B cell (primary cell): ENCODE measurements at regions of chr4 and their contacts with region 1.

Region 1: DNA sequence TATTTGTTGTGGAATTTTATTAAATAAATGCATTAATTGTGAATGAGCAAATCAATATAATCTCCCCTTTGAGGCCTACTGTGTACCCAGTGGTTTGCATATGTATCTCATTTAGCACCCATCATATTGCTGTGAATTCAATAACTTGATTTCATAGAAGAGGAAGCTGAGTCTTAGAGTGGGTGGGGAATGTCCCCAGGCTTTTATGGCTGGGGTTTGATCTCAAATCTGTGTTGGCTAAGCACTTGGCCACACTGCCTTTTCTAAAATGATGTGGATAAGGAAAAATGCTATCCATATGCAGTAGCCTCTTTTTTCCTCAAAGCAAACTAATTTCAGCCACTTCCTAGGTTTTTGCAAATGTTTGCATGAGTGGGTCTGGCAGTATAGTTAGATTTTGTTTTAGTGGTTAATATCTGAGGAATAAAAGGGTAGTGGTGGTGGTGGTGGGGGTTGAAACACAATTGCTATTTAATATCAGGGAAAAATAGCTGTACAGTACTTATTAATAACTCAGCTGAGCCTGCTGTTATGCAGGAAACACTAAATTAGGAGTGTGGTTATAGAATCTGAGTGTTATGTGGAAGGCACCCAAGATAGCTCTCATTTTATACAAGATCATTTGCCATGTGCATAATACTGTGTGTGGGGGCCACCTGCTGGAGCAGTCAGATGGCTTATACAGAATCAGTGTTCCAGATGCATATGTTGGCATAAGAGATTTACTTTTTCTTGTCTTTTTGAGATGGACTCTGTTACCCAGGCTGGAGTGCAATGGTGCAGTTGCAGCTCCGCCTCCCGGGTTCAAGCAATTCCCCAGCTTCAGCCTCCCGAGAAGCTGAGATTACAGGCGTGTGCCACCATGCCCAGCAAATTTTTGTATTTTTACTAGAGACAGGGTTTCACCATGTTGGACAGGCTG is 108.0 kb downstream of the TMEM131L start:
- DNase-seq: peak; percentile 65
- ATAC-seq: peak; percentile 83
- H3K4me3 ChIP-seq: peak overlapping the region in 1 of 5 experiments; percentile 32
- H3K4me3 Mint-ChIP-seq: peak overlapping the region; percentile 69
- H3K27ac ChIP-seq: peak overlapping the region; percentile 25 to 65
- H3K27ac Mint-ChIP-seq: peak overlapping the region; percentile 80
- H3K4me1 ChIP-seq: peaks cover 56 to 58% of the 10 kb centered on the region in 2 donors
- H3K4me1 Mint-ChIP-seq: peaks cover 71% of the 10 kb centered on the region
- H3K27me3 ChIP-seq: no peaks in the 10 kb centered on the region
- H3K27me3 Mint-ChIP-seq: no peaks in the 10 kb centered on the region
- CTCF ChIP-seq: peak; percentile 65

Region 2: DNA sequence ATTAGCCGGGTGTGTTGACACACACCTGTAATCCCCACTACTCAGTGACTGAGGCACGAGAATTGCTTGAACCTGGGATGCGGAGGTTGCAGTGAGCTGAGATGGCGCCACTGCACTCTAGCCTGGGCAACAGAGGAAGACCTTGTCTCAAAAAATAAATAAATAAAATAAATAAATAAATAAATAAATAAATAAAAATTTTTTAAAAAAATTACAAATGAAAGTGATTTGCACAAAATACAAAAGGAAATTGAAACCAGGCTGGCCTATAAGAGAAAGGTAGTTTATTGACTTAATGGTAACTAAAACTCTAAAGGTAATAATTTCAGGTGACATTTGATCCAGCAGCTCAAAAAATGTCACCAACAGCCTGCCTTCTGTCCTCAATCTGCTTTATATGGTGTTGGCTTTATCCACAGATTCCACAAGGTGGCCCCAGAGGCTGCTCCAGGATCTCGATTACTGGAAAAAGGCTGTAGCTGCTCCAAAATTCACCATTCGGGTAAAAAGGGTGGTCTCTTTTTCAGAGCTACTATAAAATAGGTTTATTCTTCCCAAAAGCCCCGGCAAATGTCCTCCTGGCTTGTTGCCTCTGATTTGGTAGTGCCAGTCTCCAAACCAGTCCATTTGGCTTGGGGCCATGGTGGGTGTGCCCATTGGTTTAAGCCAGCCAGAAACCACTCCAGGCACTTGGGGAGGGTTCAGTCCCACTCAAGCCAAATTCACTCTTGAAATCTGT is 431.3 kb before region 1 on chr4:
- CTCF ChIA-PET with region 1: interaction called, 3 read pairs
- POLR2A ChIA-PET with region 1: no interaction called
- intact Hi-C with region 1: loop called (anchors 1 kb)
- DNase-seq: peak; percentile 56
- ATAC-seq: no peak
- H3K4me3 ChIP-seq: no peak overlapping the region
- H3K4me3 Mint-ChIP-seq: no peak overlapping the region
- H3K27ac ChIP-seq: no peak overlapping the region
- H3K27ac Mint-ChIP-seq: no peak overlapping the region
- H3K4me1 ChIP-seq: peaks cover 18% of the 10 kb centered on the region in 2 donors
- H3K4me1 Mint-ChIP-seq: peaks cover 10% of the 10 kb centered on the region
- H3K27me3 ChIP-seq: peaks cover 0 to 5% (median 2%) of the 10 kb centered on the region in 4 experiments
- H3K27me3 Mint-ChIP-seq: peaks cover 10% of the 10 kb centered on the region
- CTCF ChIP-seq: peak; percentile 49

Region 3: GRCh38 chr4:153217440-153217839 is 356.7 kb before region 1 on chr4:
- CTCF ChIA-PET with region 1: no interaction called
- POLR2A ChIA-PET with region 1: no interaction called
- intact Hi-C with region 1: no loop called
- DNase-seq: peak; percentile 23
- ATAC-seq: no peak
- H3K4me3 ChIP-seq: no peak overlapping the region
- H3K4me3 Mint-ChIP-seq: no peak overlapping the region
- H3K27ac ChIP-seq: no peak overlapping the region
- H3K27ac Mint-ChIP-seq: no peak overlapping the region
- H3K4me1 ChIP-seq: peaks cover 8 to 12% of the 10 kb centered on the region in 2 donors
- H3K4me1 Mint-ChIP-seq: peaks cover 16% of the 10 kb centered on the region
- H3K27me3 ChIP-seq: peaks cover 0 to 2% (median 0%) of the 10 kb centered on the region in 4 experiments
- H3K27me3 Mint-ChIP-seq: peaks cover 6% of the 10 kb centered on the region
- CTCF ChIP-seq: no peak

Region 4: GRCh38 chr4:153418558-153418957 is 155.6 kb before region 1 on chr4:
- CTCF ChIA-PET with region 1: interaction called, 10 read pairs
- POLR2A ChIA-PET with region 1: no interaction called
- intact Hi-C with region 1: no loop called
- DNase-seq: no peak
- ATAC-seq: no peak
- H3K4me3 ChIP-seq: no peak overlapping the region
- H3K4me3 Mint-ChIP-seq: no peak overlapping the region
- H3K27ac ChIP-seq: peak overlapping the region in 1 of 2 donors; percentile 70
- H3K27ac Mint-ChIP-seq: no peak overlapping the region
- H3K4me1 ChIP-seq: peaks cover 10 to 13% of the 10 kb centered on the region in 2 donors
- H3K4me1 Mint-ChIP-seq: peaks cover 20% of the 10 kb centered on the region
- H3K27me3 ChIP-seq: no peaks in the 10 kb centered on the region
- H3K27me3 Mint-ChIP-seq: no peaks in the 10 kb centered on the region
- CTCF ChIP-seq: no peak

Region 5: DNA sequence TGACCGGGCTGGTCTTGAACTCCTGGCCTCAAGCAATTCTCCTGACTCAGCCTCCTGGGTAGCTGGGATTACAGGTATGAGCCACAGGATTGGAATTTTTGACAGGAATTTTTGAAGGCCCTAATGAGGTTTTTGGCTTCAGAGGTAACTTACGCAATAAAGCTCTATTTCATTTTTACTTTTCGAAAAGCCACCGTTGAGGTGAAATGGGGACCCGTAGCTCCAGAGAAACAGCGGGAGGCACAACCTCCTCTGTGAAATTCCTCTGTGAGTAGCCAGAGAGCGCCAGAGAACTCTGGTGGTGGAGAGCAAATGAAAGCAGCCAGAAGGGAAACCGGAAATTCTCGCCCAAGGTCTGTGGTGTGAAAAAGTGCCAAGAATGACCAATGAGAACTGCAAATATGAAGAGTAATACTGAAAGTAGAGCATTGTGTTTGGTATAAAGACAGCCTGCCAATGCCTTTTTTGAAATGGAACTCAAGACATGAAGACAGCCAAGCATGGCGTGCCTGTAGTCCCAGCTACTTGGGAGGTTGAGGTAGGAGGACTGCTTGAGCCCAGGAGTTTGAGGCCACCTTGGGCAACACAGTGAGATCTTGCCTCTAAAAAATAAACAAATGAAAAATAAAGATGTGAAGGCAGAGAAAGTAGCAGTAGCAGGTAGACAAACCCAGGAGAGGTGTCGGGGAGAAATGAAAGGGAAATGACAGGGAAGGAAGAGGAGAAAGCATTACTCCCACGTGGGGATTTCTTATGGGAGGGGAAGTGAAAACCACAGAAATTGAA is 141.0 kb before region 1 on chr4:
- CTCF ChIA-PET with region 1: interaction called, 57 read pairs
- POLR2A ChIA-PET with region 1: interaction called, 8 read pairs
- intact Hi-C with region 1: loop called (anchors 1 kb)
- DNase-seq: peak; percentile 88
- ATAC-seq: peak; percentile 81
- H3K4me3 ChIP-seq: peak overlapping the region; percentile 29 to 65 (median 40)
- H3K4me3 Mint-ChIP-seq: peak overlapping the region; percentile 78
- H3K27ac ChIP-seq: peak overlapping the region; percentile 84 to 85
- H3K27ac Mint-ChIP-seq: peak overlapping the region; percentile 84
- H3K4me1 ChIP-seq: peaks cover 60 to 64% of the 10 kb centered on the region in 2 donors
- H3K4me1 Mint-ChIP-seq: peaks cover 65% of the 10 kb centered on the region
- H3K27me3 ChIP-seq: no peaks in the 10 kb centered on the region
- H3K27me3 Mint-ChIP-seq: no peaks in the 10 kb centered on the region
- CTCF ChIP-seq: peak; percentile 77

Region 6: DNA sequence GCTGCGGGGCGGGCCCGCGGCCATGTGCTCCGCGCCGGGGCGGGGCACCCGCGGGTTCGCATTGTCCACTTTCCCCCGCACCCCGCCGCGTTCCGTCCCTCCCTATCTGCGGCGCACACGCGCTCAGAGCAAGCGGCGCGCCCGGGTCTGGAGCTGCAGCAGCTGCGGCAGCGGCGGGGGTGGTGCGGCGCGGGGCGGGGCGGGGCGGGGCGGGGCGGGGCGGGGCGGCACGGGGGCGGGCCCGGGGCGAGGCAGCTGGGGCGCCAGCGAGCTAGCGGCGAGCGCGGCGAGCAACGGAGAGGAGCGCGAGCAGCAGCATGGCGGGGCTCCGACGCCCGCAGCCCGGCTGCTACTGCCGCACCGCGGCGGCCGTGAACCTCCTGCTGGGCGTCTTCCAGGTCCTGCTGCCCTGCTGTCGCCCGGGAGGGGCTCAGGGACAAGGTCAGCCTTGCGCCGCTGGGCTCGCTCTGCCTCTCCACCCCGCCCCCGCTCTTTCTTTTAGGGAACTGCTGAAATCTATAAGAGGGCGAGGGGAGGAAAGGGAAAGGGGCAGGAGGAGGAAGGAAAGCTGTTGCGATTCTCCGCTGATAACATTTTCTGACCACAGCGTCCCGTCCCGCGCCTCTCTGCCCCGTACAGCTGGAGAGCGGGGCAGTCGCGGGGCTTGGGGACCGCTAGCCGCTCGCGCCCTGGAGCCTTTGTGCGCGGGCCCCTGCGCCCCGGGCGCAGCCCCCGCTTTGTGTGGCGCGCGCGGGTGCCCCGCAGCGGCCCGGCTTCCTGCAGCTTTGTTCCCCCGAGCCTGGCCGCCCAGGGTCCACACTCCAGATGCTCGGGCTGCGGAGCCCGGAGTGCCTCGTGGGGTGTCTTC is 107.8 kb before region 1 on chr4 and contains the start of gene TMEM131L:
- CTCF ChIA-PET with region 1: interaction called, 31 read pairs
- POLR2A ChIA-PET with region 1: interaction called, 4 read pairs
- intact Hi-C with region 1: loop called (anchors 1 kb)
- DNase-seq: peak; percentile 90
- ATAC-seq: peak; percentile 51
- H3K4me3 ChIP-seq: peak within 1 kb of the TSS; percentile 62 to 98 (median 94)
- H3K4me3 Mint-ChIP-seq: peak within 1 kb of the TSS; percentile 94
- H3K27ac ChIP-seq: peak within 1 kb of the TSS; percentile 83 to 99
- H3K27ac Mint-ChIP-seq: peak within 1 kb of the TSS; percentile 96
- H3K4me1 ChIP-seq: peaks cover 37 to 44% of the 10 kb centered on the region in 2 donors
- H3K4me1 Mint-ChIP-seq: peaks cover 55% of the 10 kb centered on the region
- H3K27me3 ChIP-seq: no peaks in the 10 kb centered on the region
- H3K27me3 Mint-ChIP-seq: no peaks in the 10 kb centered on the region
- CTCF ChIP-seq: peak; percentile 17
- total RNA-seq, gene TMEM131L: 120 and 123 TPM in 2 replicates

Region 7: GRCh38 chr4:153497988-153498967 is 75.9 kb before region 1 on chr4:
- CTCF ChIA-PET with region 1: interaction called, 16 read pairs
- POLR2A ChIA-PET with region 1: interaction called, 5 read pairs
- intact Hi-C with region 1: no loop called
- DNase-seq: peak; percentile 62
- ATAC-seq: peak; percentile 82
- H3K4me3 ChIP-seq: peak overlapping the region in 2 of 5 experiments; percentile 18 to 30
- H3K4me3 Mint-ChIP-seq: peak overlapping the region; percentile 75
- H3K27ac ChIP-seq: peak overlapping the region; percentile 7 to 98
- H3K27ac Mint-ChIP-seq: peak overlapping the region; percentile 85
- H3K4me1 ChIP-seq: peaks cover 80 to 83% of the 10 kb centered on the region in 2 donors
- H3K4me1 Mint-ChIP-seq: peaks cover 91% of the 10 kb centered on the region
- H3K27me3 ChIP-seq: no peaks in the 10 kb centered on the region
- H3K27me3 Mint-ChIP-seq: no peaks in the 10 kb centered on the region
- CTCF ChIP-seq: no peak

Region 8: DNA sequence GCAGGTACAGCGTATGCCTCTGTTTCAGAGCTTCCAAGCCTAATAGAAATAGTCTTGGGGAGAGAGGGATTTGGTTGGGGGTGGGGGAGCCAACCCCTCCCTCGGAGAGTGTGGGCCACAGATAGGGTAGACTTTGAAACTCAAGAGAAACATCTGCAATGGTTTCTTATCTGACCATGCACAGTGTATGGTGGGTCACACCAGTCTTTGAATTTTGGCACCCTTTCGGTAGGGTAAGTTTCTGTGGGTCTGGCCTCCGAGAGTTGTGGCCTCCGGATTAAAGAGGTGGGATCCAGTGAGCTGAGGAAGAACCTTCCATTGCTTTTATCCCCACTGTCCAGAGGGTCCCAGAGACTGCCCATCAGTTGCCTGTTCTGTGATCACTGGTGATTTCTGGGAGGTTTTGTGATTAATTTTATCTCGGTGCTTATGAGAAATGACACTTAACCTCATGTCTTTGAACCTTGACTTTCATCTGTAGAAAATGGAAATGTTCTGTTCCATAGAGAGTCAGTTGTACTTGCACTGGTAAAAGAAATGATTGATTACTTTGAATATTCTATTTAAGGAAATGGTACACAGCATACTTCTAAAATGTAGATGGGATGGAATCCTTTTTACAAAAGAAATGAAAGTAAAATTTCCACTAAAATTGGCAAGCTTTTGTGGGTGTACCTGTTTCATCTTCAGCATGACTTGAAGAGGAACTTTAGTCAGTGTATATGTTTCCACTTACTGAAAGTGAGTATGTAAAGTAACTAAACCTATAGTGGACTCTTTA is 45.2 kb before region 1 on chr4:
- CTCF ChIA-PET with region 1: interaction called, 7 read pairs
- POLR2A ChIA-PET with region 1: interaction called, 4 read pairs
- intact Hi-C with region 1: loop called (anchors 2 kb)
- DNase-seq: no peak
- ATAC-seq: no peak
- H3K4me3 ChIP-seq: no peak overlapping the region
- H3K4me3 Mint-ChIP-seq: peak overlapping the region; percentile 51
- H3K27ac ChIP-seq: peak overlapping the region; percentile 65 to 87
- H3K27ac Mint-ChIP-seq: peak overlapping the region; percentile 97
- H3K4me1 ChIP-seq: peaks cover 89% of the 10 kb centered on the region in 2 donors
- H3K4me1 Mint-ChIP-seq: peaks cover 87% of the 10 kb centered on the region
- H3K27me3 ChIP-seq: no peaks in the 10 kb centered on the region
- H3K27me3 Mint-ChIP-seq: no peaks in the 10 kb centered on the region
- CTCF ChIP-seq: no peak